Activated naive CD4-positive, alpha-beta T cell treated with anti-CD3 and anti-CD28 coated beads for 36 hours (primary cell): ENCODE measurements at regions of chrX and their contacts with region 1.

Region 1: GRCh38 chrX:12946838-12947544 is 27.9 kb upstream of the TMSB4X start:
- DNase-seq: peak; percentile 85
- H3K4me3 Mint-ChIP-seq: peak overlapping the region; percentile 41
- H3K27ac Mint-ChIP-seq: peak overlapping the region; percentile 98
- H3K4me1 Mint-ChIP-seq: peaks cover 55% of the 10 kb centered on the region
- H3K27me3 Mint-ChIP-seq: no peaks in the 10 kb centered on the region

Region 2: DNA sequence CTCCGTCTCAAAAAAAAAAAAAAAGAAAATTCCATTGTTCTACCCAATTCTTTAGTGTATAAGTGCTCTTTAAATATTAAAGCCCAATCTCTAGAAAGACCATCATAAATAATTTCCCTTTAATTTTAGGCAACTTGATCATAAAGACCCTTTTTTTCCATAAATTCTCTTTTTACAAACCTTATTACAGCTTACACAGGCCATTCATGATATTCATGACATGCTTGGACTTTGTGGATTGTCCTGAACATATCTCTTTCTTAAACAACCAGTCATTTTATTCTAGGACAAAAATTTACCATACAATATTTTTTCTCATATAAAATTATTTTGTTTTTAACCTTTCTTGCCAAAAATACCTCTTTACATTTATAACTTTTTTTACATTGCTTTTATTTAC is 10.0 kb before region 1 on chrX:
- CTCF ChIA-PET with region 1: interaction called, 11 read pairs
- intact Hi-C with region 1: no loop called
- DNase-seq: no peak
- H3K4me3 Mint-ChIP-seq: no peak overlapping the region
- H3K27ac Mint-ChIP-seq: no peak overlapping the region
- H3K4me1 Mint-ChIP-seq: no peaks in the 10 kb centered on the region
- H3K27me3 Mint-ChIP-seq: no peaks in the 10 kb centered on the region

Region 3: DNA sequence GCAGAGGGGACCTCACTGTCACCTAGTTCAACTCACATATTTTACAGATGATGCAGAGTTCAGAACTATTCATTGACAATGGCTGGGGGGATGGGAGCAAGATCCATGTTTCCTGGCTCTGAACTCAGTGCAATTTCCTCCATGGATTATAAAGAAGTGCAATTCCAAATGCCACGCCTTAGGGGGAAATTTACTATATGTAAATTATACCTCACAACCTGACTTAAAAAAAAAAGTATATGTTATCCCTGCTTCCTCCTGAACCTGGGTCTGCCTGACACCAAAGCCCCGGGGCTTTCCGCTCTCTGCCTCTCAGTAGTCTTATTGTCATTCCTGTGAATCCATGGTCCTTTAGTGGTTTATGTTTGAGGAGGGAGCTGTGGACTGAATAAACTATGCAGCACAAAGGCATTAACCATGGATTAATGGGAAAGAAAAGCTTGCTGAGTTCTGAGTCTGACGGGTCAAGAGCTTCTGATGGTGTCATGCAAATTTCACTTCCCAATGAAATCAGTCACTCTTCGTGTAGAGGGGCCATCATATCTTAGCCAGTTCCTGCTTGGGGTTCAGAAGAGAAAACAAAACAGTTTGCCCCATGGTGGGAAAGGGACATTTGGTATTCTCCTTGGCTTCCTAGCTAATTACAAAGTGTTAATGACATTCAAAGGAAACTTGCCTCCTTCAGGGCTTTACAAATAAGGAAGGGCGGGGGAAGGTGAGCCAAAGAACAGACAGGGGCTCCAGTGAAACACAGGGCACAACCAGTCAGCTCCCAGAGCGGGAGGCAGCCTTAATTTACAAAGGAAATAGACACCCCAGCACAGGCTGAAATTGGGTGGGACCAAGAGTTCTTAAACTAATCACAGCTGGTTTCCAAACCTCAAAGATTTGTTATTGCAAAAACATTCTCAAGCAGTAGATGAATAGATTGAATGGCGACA is 83.1 kb after region 1 on chrX:
- CTCF ChIA-PET with region 1: no interaction called
- intact Hi-C with region 1: loop called (anchors 2 kb)
- DNase-seq: no peak
- H3K4me3 Mint-ChIP-seq: peak overlapping the region; percentile 52
- H3K27ac Mint-ChIP-seq: peak overlapping the region; percentile 77
- H3K4me1 Mint-ChIP-seq: peaks cover 65% of the 10 kb centered on the region
- H3K27me3 Mint-ChIP-seq: no peaks in the 10 kb centered on the region

Region 4: DNA sequence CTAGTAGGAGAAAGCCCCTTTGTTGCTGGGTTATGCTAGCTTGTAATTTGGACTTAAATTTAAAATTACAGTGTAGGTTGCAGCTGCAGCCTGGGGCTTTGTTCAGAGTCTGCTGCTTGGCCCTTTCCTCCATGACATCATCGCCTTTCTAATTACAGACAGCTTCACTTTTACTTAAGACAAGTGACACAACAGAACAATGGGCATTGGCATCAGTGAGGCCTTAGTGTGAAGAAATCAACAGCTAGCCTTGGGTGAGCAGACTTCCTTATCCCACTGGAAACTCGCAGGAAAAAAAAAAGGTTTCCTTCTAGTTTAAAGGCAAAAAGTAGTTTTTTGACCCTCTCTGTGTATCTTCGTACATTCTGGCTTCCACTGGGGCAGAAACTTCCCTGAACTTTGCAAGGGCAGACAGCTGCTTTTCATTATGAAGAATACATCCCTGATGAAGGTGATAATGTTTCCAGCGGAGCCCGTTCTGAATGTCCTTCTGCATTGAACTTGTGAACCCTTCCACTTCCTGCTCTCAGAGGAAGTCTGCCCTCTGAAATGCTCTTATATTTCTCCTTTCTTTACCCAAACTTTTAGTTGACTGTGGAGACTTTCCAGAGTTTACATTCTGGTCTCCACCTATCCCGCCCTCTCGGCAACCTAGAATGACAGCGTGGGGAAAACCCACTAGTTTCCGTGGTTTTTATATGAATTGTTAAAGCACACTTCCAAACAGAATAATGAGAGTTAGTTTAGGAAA is 220.7 kb after region 1 on chrX:
- CTCF ChIA-PET with region 1: interaction called, 4 read pairs
- intact Hi-C with region 1: loop called (anchors 2 kb)
- DNase-seq: peak; percentile 37
- H3K4me3 Mint-ChIP-seq: peak overlapping the region; percentile 45
- H3K27ac Mint-ChIP-seq: peak overlapping the region; percentile 82
- H3K4me1 Mint-ChIP-seq: peaks cover 18% of the 10 kb centered on the region
- H3K27me3 Mint-ChIP-seq: no peaks in the 10 kb centered on the region

Region 5: DNA sequence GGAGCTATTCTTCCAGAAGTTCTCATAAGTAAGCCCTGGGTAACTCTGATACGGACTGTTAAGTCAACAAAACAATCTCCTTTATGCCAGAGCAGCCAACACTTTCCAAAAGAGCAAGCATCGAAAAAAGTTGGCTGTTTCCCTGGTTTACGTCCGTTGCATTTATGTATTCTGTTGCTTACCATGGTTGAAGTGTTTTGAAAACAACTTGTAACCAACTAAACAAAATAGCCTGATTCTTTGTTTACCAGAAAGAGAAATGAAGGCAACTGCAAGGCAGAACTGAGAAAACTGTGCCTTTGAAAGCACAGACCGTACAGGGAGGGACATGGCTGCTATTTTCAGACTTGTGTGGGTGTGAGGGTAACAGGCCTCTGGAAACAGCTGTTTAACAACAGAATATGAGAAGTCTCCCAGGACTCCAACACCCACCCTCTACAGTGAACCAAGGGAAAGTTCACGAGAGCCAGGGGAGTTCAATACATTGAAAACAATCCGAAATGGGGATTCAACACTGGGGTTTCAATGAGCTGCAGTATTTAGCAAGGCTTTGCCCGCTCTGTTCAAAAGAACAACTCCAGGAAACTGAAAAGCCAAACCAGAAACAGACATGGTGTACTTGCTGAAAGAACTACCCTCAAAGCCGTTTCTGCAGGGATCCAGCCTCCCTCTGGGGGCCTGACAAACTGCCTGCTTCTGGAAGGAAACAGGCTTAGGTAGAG is 526.6 kb after region 1 on chrX:
- CTCF ChIA-PET with region 1: interaction called, 4 read pairs
- intact Hi-C with region 1: loop called (anchors 5 kb)
- DNase-seq: peak; percentile 8
- H3K4me3 Mint-ChIP-seq: peak overlapping the region; percentile 59
- H3K27ac Mint-ChIP-seq: peak overlapping the region; percentile 84
- H3K4me1 Mint-ChIP-seq: peaks cover 26% of the 10 kb centered on the region
- H3K27me3 Mint-ChIP-seq: no peaks in the 10 kb centered on the region

Region 6: DNA sequence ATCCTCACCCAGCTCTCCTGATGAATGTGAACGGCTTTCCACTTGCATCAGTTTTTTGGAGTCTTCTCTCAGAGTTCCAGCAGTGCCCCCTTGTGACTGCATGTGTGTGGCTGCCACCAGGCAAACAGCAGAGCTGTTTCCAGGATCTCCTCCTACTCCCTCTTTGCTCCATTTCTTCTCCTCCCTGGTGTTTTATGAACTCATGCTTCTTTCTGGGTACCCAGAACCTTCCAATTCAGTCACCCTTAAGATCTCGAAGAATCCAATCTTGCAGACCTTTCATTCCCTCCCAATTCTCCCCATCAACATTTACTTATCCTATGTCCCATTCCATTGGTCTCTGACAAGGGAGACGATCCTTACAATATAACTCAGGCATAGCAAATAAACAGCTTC is 699.2 kb after region 1 on chrX:
- CTCF ChIA-PET with region 1: no interaction called
- intact Hi-C with region 1: loop called (anchors 1 kb)
- DNase-seq: peak; percentile 73
- H3K4me3 Mint-ChIP-seq: no peak overlapping the region
- H3K27ac Mint-ChIP-seq: peak overlapping the region; percentile 18
- H3K4me1 Mint-ChIP-seq: peaks cover 12% of the 10 kb centered on the region
- H3K27me3 Mint-ChIP-seq: no peaks in the 10 kb centered on the region